Common myeloid progenitor, CD34-positive (primary cell): ENCODE measurements at regions of chr12 and their contacts with region 1.

Region 1: DNA sequence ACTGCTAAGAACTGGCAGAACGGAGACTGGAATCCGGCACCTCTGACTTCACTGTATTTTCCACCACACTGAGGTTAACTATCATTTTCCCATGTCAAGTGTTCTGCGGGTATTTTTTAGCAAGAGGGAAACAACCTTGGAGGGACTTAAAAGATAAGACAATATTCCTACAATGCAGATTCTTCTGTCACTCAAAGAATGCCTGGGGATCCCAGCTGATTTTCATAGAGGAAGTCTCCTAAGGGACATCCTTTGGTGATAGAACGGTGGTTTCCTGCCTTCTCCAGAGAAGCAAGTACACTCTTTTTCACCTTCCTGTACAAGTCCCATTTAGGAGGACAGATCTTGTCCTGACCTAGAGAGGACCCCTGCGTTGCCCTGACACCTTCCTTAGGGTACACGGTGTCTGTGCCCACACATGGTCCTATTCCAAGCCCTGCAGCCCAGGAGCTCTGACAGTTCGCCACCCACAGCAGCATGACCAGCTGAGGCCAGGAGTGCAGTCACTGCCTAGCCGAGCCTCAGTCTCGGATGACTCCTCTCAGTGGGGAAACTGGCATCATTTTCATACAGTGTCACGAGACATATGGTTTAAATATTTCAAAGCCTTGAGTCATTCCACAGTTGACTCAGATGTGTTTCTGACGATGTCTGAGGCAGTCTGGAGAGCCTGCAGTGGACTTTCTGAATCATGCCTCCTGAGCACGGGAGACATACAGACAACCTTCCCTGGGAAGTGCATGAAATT is 181.3 kb upstream of the FKBP4 start:
- DNase-seq: peak in 2 of 3 donors; percentile 71 to 78
- H3K4me3 ChIP-seq: no peak overlapping the region
- H3K27ac ChIP-seq: no peak overlapping the region
- H3K4me1 ChIP-seq: peaks cover 2 to 62% (median 56%) of the 10 kb centered on the region in 4 experiments
- H3K27me3 ChIP-seq: no peaks in the 10 kb centered on the region

Region 2: DNA sequence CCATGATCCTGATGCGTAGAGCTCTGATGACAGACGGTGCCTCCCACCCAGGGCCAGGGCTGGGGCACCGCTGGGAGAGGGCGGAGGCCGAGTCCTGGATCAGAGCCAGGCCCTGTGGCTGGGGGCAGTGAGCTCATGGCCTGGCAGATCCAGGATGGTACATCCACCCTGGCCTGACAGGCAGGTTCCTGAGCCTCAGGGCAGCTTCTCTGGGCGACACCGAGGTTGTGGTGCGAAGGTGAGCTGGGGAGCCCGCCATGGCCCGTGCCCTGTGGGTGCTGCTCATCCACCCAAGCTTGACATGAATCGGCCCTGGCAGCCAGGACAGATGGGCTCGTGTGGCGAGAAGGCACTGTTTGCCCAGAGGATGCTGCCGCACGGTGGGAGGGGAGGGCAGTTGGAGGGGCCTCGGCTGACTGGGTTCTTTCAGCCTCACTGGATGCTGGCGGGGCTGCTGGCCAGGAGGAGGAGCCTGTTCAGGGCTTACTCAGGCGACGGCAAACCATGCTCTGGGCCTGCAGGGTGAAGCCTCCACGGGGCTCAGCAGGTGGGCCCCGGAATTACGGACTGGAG is 776.6 kb before region 1 on chr12:
- CTCF ChIA-PET with region 1: no interaction called
- POLR2A ChIA-PET with region 1: no interaction called
- DNase-seq: no peak
- H3K4me3 ChIP-seq: no peak overlapping the region
- H3K27ac ChIP-seq: no peak overlapping the region
- H3K4me1 ChIP-seq: peaks cover 0 to 29% (median 3%) of the 10 kb centered on the region in 4 experiments
- H3K27me3 ChIP-seq: peaks cover 0 to 22% (median 1%) of the 10 kb centered on the region in 5 experiments

Region 3: GRCh38 chr12:2501464-2502191 is 111.9 kb before region 1 on chr12:
- CTCF ChIA-PET with region 1: interaction called, 3 read pairs
- POLR2A ChIA-PET with region 1: interaction called, 13 read pairs
- DNase-seq: peak; percentile 94 to 99 (median 99)
- H3K4me3 ChIP-seq: peak overlapping the region in 3 of 7 experiments; percentile 21 to 33 (median 25)
- H3K27ac ChIP-seq: peak overlapping the region; percentile 72 to 86
- H3K4me1 ChIP-seq: peaks cover 14 to 51% (median 44%) of the 10 kb centered on the region in 4 experiments
- H3K27me3 ChIP-seq: no peaks in the 10 kb centered on the region

Region 4: GRCh38 chr12:2640705-2641104 is 27.2 kb after region 1 on chr12:
- CTCF ChIA-PET with region 1: interaction called, 29 read pairs
- POLR2A ChIA-PET with region 1: interaction called, 14 read pairs
- DNase-seq: peak; percentile 64 to 90 (median 83)
- H3K4me3 ChIP-seq: peak overlapping the region in 1 of 7 experiments; percentile 4
- H3K27ac ChIP-seq: peak overlapping the region in 1 of 2 experiments; percentile 51
- H3K4me1 ChIP-seq: peaks cover 18 to 92% (median 71%) of the 10 kb centered on the region in 4 experiments
- H3K27me3 ChIP-seq: no peaks in the 10 kb centered on the region